ENCODE measurements at regions of chr11 and their contacts with region 1.

Region 1: GRCh38 chr11:95790123-95790932 is at the start of gene CEP57:
- DNase-seq: peak; percentile 98
- ATAC-seq: peak; percentile 63
- H3K4me3 ChIP-seq: peak within 1 kb of the TSS; percentile 73 to 99 (median 96)
- H3K4me3 Mint-ChIP-seq: peak within 1 kb of the TSS; percentile 97
- H3K27ac ChIP-seq: peak within 1 kb of the TSS; percentile 98 to 100
- H3K27ac Mint-ChIP-seq: peak within 1 kb of the TSS; percentile 99
- H3K4me1 ChIP-seq: peaks cover 20% of the 10 kb centered on the region in 2 donors
- H3K4me1 Mint-ChIP-seq: peaks cover 51% of the 10 kb centered on the region
- H3K27me3 ChIP-seq: no peaks in the 10 kb centered on the region
- H3K27me3 Mint-ChIP-seq: no peaks in the 10 kb centered on the region
- CTCF ChIP-seq: no peak
- total RNA-seq, gene CEP57: 78.1 and 82.9 TPM in 2 replicates

Region 2: DNA sequence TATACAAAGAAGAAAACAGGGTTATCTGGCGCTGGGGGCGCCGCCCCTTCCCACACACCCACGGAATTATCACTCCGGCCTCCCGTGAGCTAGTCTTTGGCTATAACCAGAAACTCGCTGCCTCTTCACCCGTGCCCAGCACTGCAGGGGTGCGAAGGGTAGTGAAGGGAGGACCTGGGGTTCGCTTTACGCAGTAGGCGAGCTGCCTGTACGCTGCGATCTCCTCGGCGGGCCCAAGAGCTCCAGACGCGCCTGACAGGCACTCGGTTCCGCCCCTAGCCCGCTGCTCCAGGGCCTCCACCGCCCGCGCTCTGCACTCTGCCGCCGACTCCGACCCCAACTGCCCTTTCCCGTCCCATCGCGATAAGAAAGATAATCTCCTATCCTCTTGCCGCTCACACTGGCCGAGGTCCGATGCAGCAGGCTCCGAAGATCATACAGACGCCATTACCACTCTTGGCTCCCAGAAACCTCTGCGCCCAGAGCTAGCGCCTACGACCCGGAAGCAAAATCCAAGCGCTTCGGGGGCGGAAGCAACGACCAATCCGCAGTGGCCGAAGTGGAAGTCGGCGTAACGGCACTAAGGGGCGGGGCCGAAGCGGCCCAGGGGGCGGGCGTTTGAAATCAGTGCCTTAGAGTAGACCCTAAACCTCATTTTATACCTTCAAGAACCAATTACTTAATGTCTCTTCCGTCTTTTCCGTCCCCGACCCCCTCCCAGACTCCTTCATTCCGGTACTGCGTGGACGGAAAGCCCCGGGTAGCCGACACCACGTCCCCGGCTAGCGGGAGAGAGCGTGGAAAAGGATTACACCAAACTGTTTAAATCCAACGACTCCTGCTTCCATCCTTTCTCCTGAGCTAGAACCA is 817.0 kb before region 1 on chr11 and contains the starts of genes CWC15 and KDM4D:
- CTCF ChIA-PET with region 1: no interaction called
- POLR2A ChIA-PET with region 1: interaction called, 5 read pairs
- intact Hi-C with region 1: loop called (anchors 1 kb)
- DNase-seq: peak; percentile 94
- ATAC-seq: peak; percentile 100
- H3K4me3 ChIP-seq: peak within 1 kb of the TSS; percentile 75 to 97 (median 87)
- H3K4me3 Mint-ChIP-seq: peak within 1 kb of the TSS; percentile 92
- H3K27ac ChIP-seq: peak within 1 kb of the TSS; percentile 74 to 83
- H3K27ac Mint-ChIP-seq: peak within 1 kb of the TSS; percentile 94
- H3K4me1 ChIP-seq: peaks cover 10 to 14% of the 10 kb centered on the region in 2 donors
- H3K4me1 Mint-ChIP-seq: peaks cover 13% of the 10 kb centered on the region
- H3K27me3 ChIP-seq: no peaks in the 10 kb centered on the region
- H3K27me3 Mint-ChIP-seq: no peaks in the 10 kb centered on the region
- CTCF ChIP-seq: no peak
- total RNA-seq, gene CWC15: 59.5 and 59.8 TPM in 2 replicates
- total RNA-seq, gene KDM4D: 0.44 and 0.73 TPM in 2 replicates

Region 3: GRCh38 chr11:95089620-95090542 is 700.4 kb before region 1 on chr11 and contains the start of gene ENDOD1:
- CTCF ChIA-PET with region 1: interaction called, 3 read pairs
- POLR2A ChIA-PET with region 1: interaction called, 6 read pairs
- intact Hi-C with region 1: loop called (anchors 1 kb)
- DNase-seq: peak; percentile 93
- ATAC-seq: peak; percentile 94
- H3K4me3 ChIP-seq: peak within 1 kb of the TSS; percentile 13 to 82 (median 79)
- H3K4me3 Mint-ChIP-seq: peak within 1 kb of the TSS; percentile 94
- H3K27ac ChIP-seq: peak within 1 kb of the TSS; percentile 79 to 94
- H3K27ac Mint-ChIP-seq: peak within 1 kb of the TSS; percentile 98
- H3K4me1 ChIP-seq: peaks cover 50 to 52% of the 10 kb centered on the region in 2 donors
- H3K4me1 Mint-ChIP-seq: peaks cover 59% of the 10 kb centered on the region
- H3K27me3 ChIP-seq: no peaks in the 10 kb centered on the region
- H3K27me3 Mint-ChIP-seq: no peaks in the 10 kb centered on the region
- CTCF ChIP-seq: no peak
- total RNA-seq, gene ENDOD1: 11.7 and 12.0 TPM in 2 replicates